OCI-LY7 (cell line): ENCODE measurements at regions of chr21 and their contacts with region 1.

Region 1: DNA sequence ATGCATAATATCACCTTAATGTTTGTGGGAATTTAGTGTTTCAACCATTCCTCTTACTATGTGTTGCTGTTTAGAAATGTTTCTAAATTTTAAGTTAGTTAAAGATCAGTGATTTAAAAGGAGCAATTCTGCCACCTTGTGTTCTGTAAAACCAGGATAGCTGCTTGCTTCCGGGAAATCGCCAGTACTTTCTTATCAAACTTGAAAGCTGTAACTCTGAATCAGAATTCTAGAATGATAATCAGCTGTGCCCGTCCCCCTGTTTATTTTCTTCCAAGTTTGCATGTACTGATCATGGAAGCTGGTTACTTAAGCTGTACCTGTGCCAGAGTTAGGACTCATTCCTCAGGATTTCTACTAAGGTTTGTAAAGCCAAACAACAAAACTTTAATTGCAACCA is 656.4 kb downstream of the LTN1 start:
- DNase-seq: peak; percentile 43
- H3K4me3 ChIP-seq: no peak overlapping the region
- H3K27ac ChIP-seq: no peak overlapping the region
- H3K4me1 ChIP-seq: peaks cover 21% of the 10 kb centered on the region
- CTCF ChIP-seq: peak; percentile 76

Region 2: GRCh38 chr21:26850108-26850643 is 1486.1 kb before region 1 on chr21:
- CTCF ChIA-PET with region 1: no interaction called
- POLR2A ChIA-PET with region 1: no interaction called
- intact Hi-C with region 1: loop called (anchors 10 kb)
- DNase-seq: peak; percentile 31
- H3K4me3 ChIP-seq: no peak overlapping the region
- H3K27ac ChIP-seq: no peak overlapping the region
- H3K4me1 ChIP-seq: no peaks in the 10 kb centered on the region
- CTCF ChIP-seq: peak; percentile 78

Region 3: GRCh38 chr21:27572686-27573085 is 763.6 kb before region 1 on chr21:
- CTCF ChIA-PET with region 1: no interaction called
- POLR2A ChIA-PET with region 1: no interaction called
- intact Hi-C with region 1: no loop called
- DNase-seq: no peak
- H3K4me3 ChIP-seq: no peak overlapping the region
- H3K27ac ChIP-seq: no peak overlapping the region
- H3K4me1 ChIP-seq: no peaks in the 10 kb centered on the region
- CTCF ChIP-seq: no peak

Region 4: DNA sequence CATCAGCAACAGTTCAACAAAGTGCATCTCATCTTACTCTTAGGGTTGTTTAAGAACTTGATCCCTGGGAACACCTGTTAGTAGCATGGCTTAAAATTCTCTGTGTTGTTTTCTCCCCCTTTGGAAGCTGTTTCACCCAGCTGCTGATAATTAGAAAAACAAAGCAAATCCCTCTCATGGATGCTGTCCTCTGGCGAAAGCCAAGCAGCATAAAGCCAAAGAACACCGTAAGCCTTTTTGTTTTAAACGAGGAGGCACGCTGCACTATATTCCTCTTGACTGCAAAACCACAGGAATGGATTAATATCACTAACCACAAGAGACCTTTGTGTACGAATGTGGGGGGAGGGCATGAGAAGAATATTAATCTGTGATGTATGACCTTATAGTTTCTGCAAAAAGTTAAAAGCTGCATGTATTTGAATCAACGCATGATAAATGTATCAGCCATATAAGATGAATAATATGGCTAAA is 266.8 kb before region 1 on chr21:
- CTCF ChIA-PET with region 1: no interaction called
- POLR2A ChIA-PET with region 1: interaction called, 3 read pairs
- intact Hi-C with region 1: loop called (anchors 10 kb)
- DNase-seq: no peak
- H3K4me3 ChIP-seq: no peak overlapping the region
- H3K27ac ChIP-seq: no peak overlapping the region
- H3K4me1 ChIP-seq: peaks cover 39% of the 10 kb centered on the region
- CTCF ChIP-seq: no peak

Region 5: DNA sequence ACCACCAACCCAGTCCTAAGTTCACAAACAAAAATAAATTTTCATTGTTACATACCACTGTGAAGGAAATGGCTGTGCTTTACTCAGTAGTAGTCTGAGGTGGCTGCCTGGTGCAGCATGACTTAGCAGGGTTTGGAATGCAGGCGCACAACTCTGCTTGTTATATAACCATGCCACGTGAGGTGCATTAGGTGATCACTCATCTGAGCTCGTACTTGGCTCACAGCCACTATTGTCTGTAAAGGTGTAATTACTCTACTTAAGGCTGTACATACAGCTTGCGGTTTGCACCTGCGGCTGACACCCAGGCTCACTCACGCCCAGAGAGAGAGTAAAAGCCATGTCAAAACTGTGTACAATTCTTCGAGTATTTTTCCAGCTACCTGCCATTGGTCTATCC is 57.0 kb after region 1 on chr21:
- CTCF ChIA-PET with region 1: no interaction called
- POLR2A ChIA-PET with region 1: no interaction called
- intact Hi-C with region 1: no loop called
- DNase-seq: no peak
- H3K4me3 ChIP-seq: no peak overlapping the region
- H3K27ac ChIP-seq: no peak overlapping the region
- H3K4me1 ChIP-seq: no peaks in the 10 kb centered on the region
- CTCF ChIP-seq: no peak

Region 6: DNA sequence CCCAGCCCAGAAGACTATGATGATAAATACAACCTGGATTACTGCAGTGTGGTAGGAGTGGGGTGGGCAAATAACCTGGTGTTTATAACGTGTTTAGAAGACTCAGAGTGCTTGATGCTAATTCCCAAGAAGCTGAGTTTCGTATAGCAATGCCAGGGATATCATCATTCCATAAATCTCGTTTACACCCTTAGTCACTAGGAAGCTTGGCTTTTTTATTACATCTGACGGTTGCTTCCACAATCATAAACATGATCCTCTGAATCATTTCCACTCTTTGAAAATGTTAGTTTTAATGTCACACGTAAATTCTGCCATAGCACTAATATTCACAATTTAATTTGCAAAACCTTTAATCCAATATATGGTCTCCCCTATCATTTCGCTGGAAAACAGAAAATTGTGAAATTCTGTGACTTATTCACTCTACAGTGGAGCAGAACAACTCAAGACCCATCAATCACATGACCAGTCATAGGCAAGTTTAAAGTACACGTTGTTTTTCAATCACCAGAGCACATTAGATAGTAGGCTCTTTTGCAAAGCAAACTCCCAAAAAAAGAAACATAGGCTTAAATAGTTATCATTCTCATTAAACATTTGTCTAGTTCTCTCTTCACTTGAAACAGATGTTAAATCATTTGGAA is 335.4 kb after region 1 on chr21:
- CTCF ChIA-PET with region 1: no interaction called
- POLR2A ChIA-PET with region 1: no interaction called
- intact Hi-C with region 1: no loop called
- DNase-seq: no peak
- H3K4me3 ChIP-seq: no peak overlapping the region
- H3K27ac ChIP-seq: no peak overlapping the region
- H3K4me1 ChIP-seq: no peaks in the 10 kb centered on the region
- CTCF ChIP-seq: no peak

Region 7: DNA sequence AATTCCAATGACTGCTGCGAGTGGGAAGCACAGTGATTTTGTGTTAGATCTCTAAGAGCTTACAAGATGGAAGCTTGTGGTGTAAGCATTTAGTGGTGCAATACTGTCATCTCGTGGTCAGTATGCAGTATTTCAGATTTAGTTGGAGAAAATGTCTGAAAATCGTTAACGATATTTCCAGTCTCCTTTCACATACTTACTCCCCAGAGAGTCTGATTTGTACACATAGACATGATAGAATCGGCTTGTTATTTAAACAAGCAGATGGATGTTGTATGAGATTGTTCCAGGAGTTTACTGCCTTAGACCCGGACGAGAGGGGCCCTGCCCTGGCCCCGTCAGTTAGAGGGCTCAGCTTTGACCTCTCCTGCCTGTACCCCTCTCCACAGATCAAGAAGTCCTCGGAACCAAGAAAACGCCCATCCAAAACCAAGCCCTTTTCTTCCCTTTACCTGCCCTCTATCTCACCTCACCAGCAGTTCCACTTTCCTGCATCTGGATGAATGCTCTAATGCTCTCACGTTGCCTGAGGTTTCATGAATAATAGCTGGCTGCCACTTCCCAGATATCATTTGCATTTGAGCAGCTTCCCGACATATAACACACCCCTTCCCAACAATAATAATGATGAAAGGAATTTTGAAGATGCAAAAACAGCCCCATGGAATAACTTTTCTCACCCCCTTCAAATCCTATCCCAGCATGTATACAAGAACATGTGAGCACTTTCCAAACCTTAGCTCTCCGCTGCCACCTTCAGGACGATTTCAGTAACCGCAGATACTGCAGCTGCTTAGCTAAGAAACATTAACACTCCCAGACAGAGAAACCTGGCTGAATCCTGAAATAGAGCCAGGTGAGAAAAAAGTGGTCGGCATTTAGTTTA is 409.1 kb after region 1 on chr21:
- CTCF ChIA-PET with region 1: no interaction called
- POLR2A ChIA-PET with region 1: no interaction called
- intact Hi-C with region 1: loop called (anchors 5 kb)
- DNase-seq: peak; percentile 79
- H3K4me3 ChIP-seq: peak overlapping the region; percentile 41
- H3K27ac ChIP-seq: no peak overlapping the region
- H3K4me1 ChIP-seq: peaks cover 5% of the 10 kb centered on the region
- CTCF ChIP-seq: peak; percentile 89